ENCODE measurements at regions of chr7 and their contacts with region 1.

Region 1: DNA sequence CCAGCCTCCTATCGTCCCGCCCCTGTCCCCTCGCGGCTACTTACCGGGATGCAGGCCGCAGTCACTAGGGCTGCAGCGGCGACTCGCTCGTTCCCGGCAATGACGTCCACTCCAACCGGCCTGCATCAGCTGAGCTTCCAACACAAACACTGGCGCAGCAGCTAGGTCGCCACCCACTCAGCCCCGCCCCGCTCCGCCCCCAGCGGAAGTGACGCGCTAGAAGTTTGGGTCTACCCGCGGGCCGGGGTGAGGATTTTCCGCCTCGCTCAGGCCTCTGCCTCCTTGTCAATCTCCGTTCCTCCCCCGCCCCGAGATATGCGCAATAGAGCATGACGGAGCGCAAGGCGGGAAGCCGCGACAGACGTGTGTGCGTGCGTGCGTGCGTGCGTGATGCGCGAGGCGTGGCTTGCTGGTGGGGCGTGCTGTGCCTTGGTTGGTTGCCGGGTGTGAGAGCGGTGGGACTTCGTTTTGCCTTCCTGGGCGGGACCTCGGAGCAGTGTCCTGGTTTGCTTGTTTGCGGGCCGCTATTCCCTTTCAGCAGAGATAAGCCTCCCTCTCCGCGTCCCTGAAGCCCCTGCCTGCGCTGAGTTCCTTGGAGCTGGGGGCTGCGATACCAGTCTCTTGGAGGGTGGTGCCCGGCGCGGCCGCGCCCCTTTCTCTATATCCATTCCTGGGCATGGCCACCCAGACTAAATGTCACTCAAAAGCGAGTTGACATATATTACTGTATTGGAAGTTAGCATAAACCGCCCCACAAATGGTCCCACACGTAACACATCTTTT is at the start of gene PNPLA8:
- H3K4me3 ChIP-seq: peak within 1 kb of the TSS; percentile 96
- H3K27ac ChIP-seq: peak within 1 kb of the TSS; percentile 62
- H3K4me1 ChIP-seq: peaks cover 2% of the 10 kb centered on the region; the same call in 1 of the 2 replicates
- CTCF ChIP-seq: peak; percentile 12; the same call in 1 of the 2 replicates

Region 2: GRCh38 chr7:108569381-108570145 is 43.4 kb after region 1 on chr7 and contains the starts of genes DNAJB9 and THAP5:
- CTCF ChIA-PET with region 1: interaction called, 4 read pairs
- POLR2A ChIA-PET with region 1: interaction called, 42 read pairs
- H3K4me3 ChIP-seq: peak within 1 kb of the TSS; percentile 87
- H3K27ac ChIP-seq: peak within 1 kb of the TSS; percentile 80
- H3K4me1 ChIP-seq: peaks cover 5% of the 10 kb centered on the region; the same call in 1 of the 2 replicates
- CTCF ChIP-seq: peak; percentile 49

Measured in HEK293 (cell line).